Activated B cell treated with CpG ODN at 0.5 μM for 24 hours (primary cell): ENCODE measurements at regions of chr18 and their contacts with region 1.

Region 1: DNA sequence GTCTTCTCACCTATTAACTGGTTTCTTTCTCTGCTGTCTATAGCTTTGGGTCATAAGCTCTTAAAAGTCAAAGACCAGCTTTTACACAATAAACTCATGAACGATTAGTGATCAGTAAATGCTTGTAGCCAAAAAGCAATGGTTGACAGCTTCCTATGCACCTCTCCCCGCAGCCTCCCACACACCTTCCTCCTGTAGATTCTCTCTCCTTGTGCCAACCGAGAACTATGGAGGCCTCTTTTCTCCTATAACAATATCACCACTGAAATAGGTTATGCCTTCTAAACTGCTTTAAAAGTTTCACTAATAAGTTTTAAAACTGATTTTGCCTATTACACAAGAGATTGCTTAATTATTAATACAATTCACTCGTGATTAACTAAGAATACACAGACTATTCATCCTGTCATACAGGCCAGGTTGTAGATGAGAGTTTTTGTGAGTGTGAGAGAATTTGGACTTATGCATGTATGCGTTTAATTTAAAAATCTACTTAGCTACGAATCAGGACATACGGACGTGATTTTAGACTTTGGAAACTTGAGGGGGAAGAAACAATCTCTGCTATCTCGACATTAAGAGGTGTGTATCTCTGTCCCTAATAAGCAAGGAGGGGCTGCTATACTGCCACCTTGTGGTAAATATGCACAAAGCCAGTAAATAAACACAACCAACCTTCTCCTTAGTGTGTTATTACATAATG is 229.1 kb upstream of the RBBP8 start:
- DNase-seq: no peak
- ATAC-seq: no peak
- H3K4me3 Mint-ChIP-seq: no peak overlapping the region
- H3K27ac Mint-ChIP-seq: no peak overlapping the region
- H3K4me1 Mint-ChIP-seq: no peaks in the 10 kb centered on the region
- H3K27me3 Mint-ChIP-seq: peaks cover 6% of the 10 kb centered on the region
- CTCF ChIP-seq: no peak

Region 2: GRCh38 chr18:21489119-21489750 is 1214.8 kb before region 1 on chr18:
- CTCF ChIA-PET with region 1: no interaction called
- POLR2A ChIA-PET with region 1: no interaction called
- intact Hi-C with region 1: loop called (anchors 5 kb)
- DNase-seq: no peak
- ATAC-seq: no peak
- H3K4me3 Mint-ChIP-seq: no peak overlapping the region
- H3K27ac Mint-ChIP-seq: no peak overlapping the region
- H3K4me1 Mint-ChIP-seq: no peaks in the 10 kb centered on the region
- H3K27me3 Mint-ChIP-seq: peaks cover 9% of the 10 kb centered on the region
- CTCF ChIP-seq: no peak

Region 3: GRCh38 chr18:21897811-21898210 is 806.2 kb before region 1 on chr18:
- CTCF ChIA-PET with region 1: no interaction called
- POLR2A ChIA-PET with region 1: no interaction called
- intact Hi-C with region 1: loop called (anchors 5 kb)
- DNase-seq: no peak
- ATAC-seq: no peak
- H3K4me3 Mint-ChIP-seq: no peak overlapping the region
- H3K27ac Mint-ChIP-seq: no peak overlapping the region
- H3K4me1 Mint-ChIP-seq: peaks cover 4% of the 10 kb centered on the region
- H3K27me3 Mint-ChIP-seq: peaks cover 17% of the 10 kb centered on the region
- CTCF ChIP-seq: peak; percentile 35

Region 4: GRCh38 chr18:21997207-21998143 is 706.6 kb before region 1 on chr18:
- CTCF ChIA-PET with region 1: no interaction called
- POLR2A ChIA-PET with region 1: no interaction called
- intact Hi-C with region 1: loop called (anchors 10 kb)
- DNase-seq: no peak
- ATAC-seq: no peak
- H3K4me3 Mint-ChIP-seq: no peak overlapping the region
- H3K27ac Mint-ChIP-seq: no peak overlapping the region
- H3K4me1 Mint-ChIP-seq: peaks cover 3% of the 10 kb centered on the region
- H3K27me3 Mint-ChIP-seq: peaks cover 2% of the 10 kb centered on the region
- CTCF ChIP-seq: no peak